WTC11 (cell line): ENCODE measurements at regions of chr11 and their contacts with region 1.

Region 1: DNA sequence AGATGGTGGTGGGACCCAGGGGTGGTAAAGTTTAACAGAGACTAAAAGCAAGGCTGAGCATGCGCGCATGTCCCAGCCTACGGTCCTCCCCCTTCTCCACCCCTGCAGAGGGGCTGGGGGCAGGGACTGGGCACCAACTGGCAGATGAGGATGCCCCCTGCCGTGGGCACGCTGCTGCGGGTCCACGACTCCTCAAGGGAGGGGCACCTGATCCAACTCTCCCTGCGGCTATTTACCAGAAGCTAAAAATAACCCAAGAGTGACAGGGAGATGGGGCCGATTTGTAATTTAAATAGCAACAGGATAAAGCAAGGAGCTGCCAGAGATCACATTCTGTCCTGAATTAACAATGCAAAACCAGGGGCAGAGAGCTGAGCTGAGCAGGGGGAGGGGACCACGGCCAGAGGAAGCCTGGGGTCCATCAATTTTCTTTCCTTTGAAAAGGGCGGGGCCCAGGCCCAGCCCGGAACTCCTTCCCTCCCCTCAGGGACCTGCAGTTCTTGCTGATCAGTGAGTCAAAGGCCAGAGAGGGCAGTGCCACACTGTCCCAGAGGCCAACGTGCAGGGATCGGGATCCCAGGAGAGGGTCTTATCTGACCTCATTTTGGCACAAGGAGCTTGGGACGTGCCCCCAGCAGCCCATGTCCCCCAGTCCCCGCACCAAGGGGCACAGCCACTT is 8.1 kb upstream of the DGKZ start:
- DNase-seq: peak; percentile 83
- ATAC-seq: peak; percentile 89
- H3K4me3 Mint-ChIP-seq: peak overlapping the region; percentile 60
- H3K27ac Mint-ChIP-seq: peak overlapping the region; percentile 99
- H3K4me1 Mint-ChIP-seq: peaks cover 96% of the 10 kb centered on the region
- H3K27me3 Mint-ChIP-seq: peaks cover 9% of the 10 kb centered on the region
- CTCF ChIP-seq: no peak

Region 2: GRCh38 chr11:46367244-46367915 is 28.3 kb after region 1 on chr11:
- CTCF ChIA-PET with region 1: interaction called, 15 read pairs
- POLR2A ChIA-PET with region 1: no interaction called
- DNase-seq: peak; percentile 89
- ATAC-seq: peak; percentile 66
- H3K4me3 Mint-ChIP-seq: no peak overlapping the region
- H3K27ac Mint-ChIP-seq: no peak overlapping the region; the same call in 1 of the 2 replicates
- H3K4me1 Mint-ChIP-seq: peaks cover 26% of the 10 kb centered on the region
- H3K27me3 Mint-ChIP-seq: no peaks in the 10 kb centered on the region
- CTCF ChIP-seq: peak; percentile 96